OCI-LY7 (cell line): ENCODE measurements at regions of chr6 and their contacts with region 1.

Region 1: GRCh38 chr6:152484806-152485205 is 152.4 kb downstream of the SYNE1 start:
- DNase-seq: no peak
- H3K4me3 ChIP-seq: no peak overlapping the region
- H3K27ac ChIP-seq: no peak overlapping the region
- H3K4me1 ChIP-seq: no peaks in the 10 kb centered on the region
- CTCF ChIP-seq: no peak

Region 2: DNA sequence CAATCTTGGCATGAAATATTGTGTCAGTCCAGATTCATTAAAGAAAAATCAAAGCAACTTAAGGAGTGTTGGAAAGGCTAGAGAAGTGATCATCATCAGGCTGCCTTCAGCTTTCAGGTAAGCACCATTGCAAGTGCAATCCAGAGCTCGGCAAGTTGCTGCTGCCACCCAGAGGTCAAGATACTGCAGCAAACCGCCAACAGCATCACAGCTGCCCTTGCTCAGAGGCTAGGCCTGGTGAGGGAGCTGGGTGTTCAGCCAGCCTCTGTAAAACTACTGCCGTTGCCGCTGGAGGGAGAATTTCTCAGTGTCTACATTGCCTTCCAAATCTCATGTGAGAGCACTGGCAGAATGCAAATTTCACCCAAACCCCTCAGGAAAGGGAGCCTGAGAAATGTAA is 158.2 kb after region 1 on chr6:
- CTCF ChIA-PET with region 1: no interaction called
- POLR2A ChIA-PET with region 1: no interaction called
- intact Hi-C with region 1: loop called (anchors 1 kb)
- DNase-seq: peak; percentile 84
- H3K4me3 ChIP-seq: no peak overlapping the region
- H3K27ac ChIP-seq: no peak overlapping the region
- H3K4me1 ChIP-seq: peaks cover 6% of the 10 kb centered on the region
- CTCF ChIP-seq: peak; percentile 85

Region 3: DNA sequence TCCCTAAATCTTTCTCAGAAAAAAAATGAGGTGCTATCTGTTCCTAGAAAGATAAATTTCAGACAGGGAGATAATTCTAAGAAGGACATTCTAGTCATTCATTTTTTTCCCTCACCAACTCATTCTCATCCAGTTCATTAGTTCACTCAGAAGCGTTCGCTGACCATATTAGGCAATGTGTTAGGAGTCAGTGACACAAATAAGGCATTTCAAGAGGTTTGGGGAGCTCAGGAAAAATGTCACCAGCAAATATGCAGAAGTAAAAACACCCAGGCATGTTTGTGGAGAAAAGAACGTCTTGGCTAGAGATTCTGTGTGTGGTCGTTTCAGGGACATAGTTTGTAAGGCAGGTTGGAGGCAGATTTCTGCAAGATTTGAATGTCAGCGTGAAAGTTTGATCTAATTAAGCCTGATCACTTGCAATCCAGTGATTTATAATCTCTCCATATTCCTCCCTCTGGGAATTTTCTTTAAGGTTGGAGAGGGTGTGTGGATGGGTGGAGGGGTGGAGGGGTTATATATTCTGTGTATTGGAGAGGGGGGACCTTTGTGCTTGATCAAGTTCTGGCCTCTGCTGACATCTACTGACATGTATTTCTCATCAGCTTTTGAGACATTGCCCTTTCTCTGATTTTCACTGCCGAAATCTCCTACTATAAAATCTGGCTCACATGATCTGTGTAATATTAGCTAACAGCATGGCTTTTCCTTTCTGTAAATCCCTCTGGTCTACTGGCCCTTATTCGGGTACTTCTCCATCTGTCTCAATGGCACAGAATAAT is 216.5 kb after region 1 on chr6:
- CTCF ChIA-PET with region 1: no interaction called
- POLR2A ChIA-PET with region 1: no interaction called
- intact Hi-C with region 1: loop called (anchors 5 kb)
- DNase-seq: peak; percentile 46
- H3K4me3 ChIP-seq: peak overlapping the region; percentile 7
- H3K27ac ChIP-seq: no peak overlapping the region
- H3K4me1 ChIP-seq: peaks cover 18% of the 10 kb centered on the region
- CTCF ChIP-seq: peak; percentile 82

Region 4: GRCh38 chr6:153150752-153151440 is 666.1 kb after region 1 on chr6:
- CTCF ChIA-PET with region 1: no interaction called
- POLR2A ChIA-PET with region 1: no interaction called
- intact Hi-C with region 1: no loop called
- DNase-seq: no peak
- H3K4me3 ChIP-seq: no peak overlapping the region
- H3K27ac ChIP-seq: no peak overlapping the region
- H3K4me1 ChIP-seq: no peaks in the 10 kb centered on the region
- CTCF ChIP-seq: no peak